ENCODE measurements at regions of chr6 and their contacts with region 1.

Region 1: GRCh38 chr6:167832497-167833395 is 6.0 kb downstream of the AFDN start:
- DNase-seq: no peak
- ATAC-seq: peak; percentile 53
- H3K4me3 ChIP-seq: no peak overlapping the region
- H3K27ac ChIP-seq: peak overlapping the region; percentile 68
- H3K4me1 ChIP-seq: peaks cover 9 to 54% of the 10 kb centered on the region in 2 experiments
- H3K27me3 ChIP-seq: no peaks in the 10 kb centered on the region
- CTCF ChIP-seq: no peak
- EP300 ChIP-seq: no peak
- POLR2A ChIP-seq: no peak
- RAD21 ChIP-seq: no peak

Region 2: DNA sequence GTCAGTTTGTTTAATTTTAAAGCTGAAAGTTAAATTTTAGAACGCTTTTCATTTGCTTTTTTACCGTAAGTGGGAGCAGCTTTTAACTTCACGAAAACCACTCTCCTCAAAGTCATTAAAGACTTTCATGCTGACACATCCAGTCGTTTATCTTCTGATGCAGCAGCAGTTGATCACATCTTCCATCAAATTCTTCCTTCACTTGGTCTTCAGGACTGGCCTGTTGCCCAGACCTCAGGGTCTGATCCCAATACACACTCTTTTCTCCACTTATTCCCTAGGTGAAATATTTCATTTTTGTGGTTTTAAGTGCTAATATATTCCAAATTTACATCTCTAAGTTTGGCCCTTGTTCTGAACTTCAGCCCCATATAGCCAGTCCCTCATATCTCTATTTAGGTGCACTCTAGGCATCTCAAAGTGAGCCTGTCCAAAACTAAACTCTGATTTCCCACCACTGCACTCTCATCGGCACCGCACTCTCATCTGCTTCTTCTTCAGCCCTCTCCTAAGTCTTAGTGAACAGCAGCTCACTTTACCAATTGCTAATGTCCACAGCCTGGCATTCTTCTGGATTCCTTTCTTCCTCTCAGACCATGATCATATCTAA is 14.4 kb after region 1 on chr6:
- CTCF ChIA-PET with region 1: no interaction called
- POLR2A ChIA-PET with region 1: interaction called, 25 read pairs
- in situ Hi-C with region 1: no loop called
- intact Hi-C with region 1: no loop called
- DNase-seq: peak in 1 of 4 experiments; percentile 76
- ATAC-seq: peak; percentile 66
- H3K4me3 ChIP-seq: no peak overlapping the region
- H3K27ac ChIP-seq: peak overlapping the region; percentile 63
- H3K4me1 ChIP-seq: peaks cover 14 to 79% of the 10 kb centered on the region in 2 experiments
- H3K27me3 ChIP-seq: no peaks in the 10 kb centered on the region
- CTCF ChIP-seq: no peak
- EP300 ChIP-seq: peak; percentile 80; the same call in 1 of the 2 replicates
- POLR2A ChIP-seq: no peak
- RAD21 ChIP-seq: no peak

Region 3: DNA sequence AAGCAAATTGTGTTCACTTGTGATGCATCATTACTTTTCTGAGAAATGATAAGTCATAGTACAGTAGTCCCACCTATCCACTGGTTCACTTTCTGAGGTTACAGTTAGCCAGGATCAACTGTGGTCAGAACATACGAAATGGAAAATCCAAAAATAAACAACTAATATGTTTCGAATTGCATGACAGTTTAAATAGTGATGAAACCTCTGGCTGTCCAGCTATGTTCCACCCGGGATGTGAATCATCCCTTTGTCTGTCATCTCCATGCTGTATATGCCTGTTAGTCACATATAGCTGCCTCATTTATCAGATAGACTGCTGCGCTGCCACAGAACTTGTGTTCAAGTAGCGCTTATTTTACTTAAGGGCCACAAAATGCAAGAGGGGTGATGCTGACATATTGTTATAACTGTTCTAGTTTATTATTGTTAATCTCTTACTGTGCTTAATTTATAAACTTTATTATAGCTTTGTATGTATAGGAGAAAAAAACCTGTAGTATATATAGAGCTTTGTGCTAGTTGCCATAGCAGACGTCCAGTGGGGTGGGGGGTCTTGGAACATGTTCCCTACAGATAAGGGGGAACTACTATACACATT is 23.2 kb after region 1 on chr6:
- CTCF ChIA-PET with region 1: no interaction called
- POLR2A ChIA-PET with region 1: interaction called, 12 read pairs
- in situ Hi-C with region 1: no loop called
- intact Hi-C with region 1: loop called (anchors 2 kb)
- DNase-seq: peak; percentile 54 to 92 (median 72)
- ATAC-seq: peak; percentile 75
- H3K4me3 ChIP-seq: peak overlapping the region; percentile 2; the same call in 1 of the 2 replicates
- H3K27ac ChIP-seq: peak overlapping the region; percentile 96
- H3K4me1 ChIP-seq: peaks cover 7 to 83% of the 10 kb centered on the region in 2 experiments
- H3K27me3 ChIP-seq: no peaks in the 10 kb centered on the region
- CTCF ChIP-seq: no peak
- EP300 ChIP-seq: peak; percentile 93
- POLR2A ChIP-seq: peak; percentile 59
- RAD21 ChIP-seq: no peak

Region 4: GRCh38 chr6:167907837-167908681 is 75.3 kb after region 1 on chr6:
- CTCF ChIA-PET with region 1: no interaction called
- POLR2A ChIA-PET with region 1: no interaction called
- in situ Hi-C with region 1: no loop called
- intact Hi-C with region 1: no loop called
- DNase-seq: peak in 2 of 4 experiments; percentile 22
- ATAC-seq: peak; percentile 73
- H3K4me3 ChIP-seq: no peak overlapping the region
- H3K27ac ChIP-seq: no peak overlapping the region
- H3K4me1 ChIP-seq: no peaks in the 10 kb centered on the region
- H3K27me3 ChIP-seq: no peaks in the 10 kb centered on the region
- CTCF ChIP-seq: peak; percentile 23 to 51 (median 32); a peak in 3 of 6 replicates
- EP300 ChIP-seq: no peak
- POLR2A ChIP-seq: no peak
- RAD21 ChIP-seq: peak in 1 of 2 experiments; percentile 26; a peak in 1 of 4 replicates

Region 5: DNA sequence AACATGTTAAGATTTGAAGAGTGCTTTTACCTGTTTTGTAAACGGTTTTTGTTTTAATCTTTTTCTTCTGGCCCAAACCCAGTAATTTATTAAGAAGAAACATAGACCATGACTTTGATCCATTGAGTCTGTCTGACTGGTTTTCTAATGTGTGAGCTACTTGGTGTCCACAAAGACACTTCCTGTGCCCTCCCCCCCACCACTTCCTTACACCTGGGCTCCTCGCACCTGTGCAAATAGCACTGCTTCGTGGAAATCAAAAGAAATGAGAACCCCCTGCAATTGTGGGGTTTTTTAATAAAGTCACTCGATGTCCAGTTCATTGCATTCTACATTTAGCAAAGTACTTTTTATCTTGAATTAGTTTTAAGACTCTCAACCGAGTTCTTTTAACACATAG is 673.7 kb after region 1 on chr6:
- CTCF ChIA-PET with region 1: no interaction called
- POLR2A ChIA-PET with region 1: no interaction called
- in situ Hi-C with region 1: no loop called
- intact Hi-C with region 1: no loop called
- DNase-seq: no peak
- ATAC-seq: no peak
- H3K4me3 ChIP-seq: no peak overlapping the region
- H3K27ac ChIP-seq: no peak overlapping the region
- H3K4me1 ChIP-seq: no peaks in the 10 kb centered on the region; a peak in 1 of 5 replicates
- H3K27me3 ChIP-seq: peaks cover 0 to 31% of the 10 kb centered on the region in 2 experiments; a peak in 4 of 5 replicates
- CTCF ChIP-seq: no peak
- EP300 ChIP-seq: no peak
- POLR2A ChIP-seq: no peak
- RAD21 ChIP-seq: no peak